ENCODE measurements at regions of chr1 and their contacts with region 1.

Region 1: GRCh38 chr1:239951511-239952140 is 140.1 kb upstream of the FMN2 start:
- DNase-seq: peak; percentile 63
- ATAC-seq: no peak
- H3K4me3 ChIP-seq: peak overlapping the region in 1 of 3 experiments; percentile 7; a peak in 1 of 6 replicates
- H3K27ac ChIP-seq: no peak overlapping the region
- H3K4me1 ChIP-seq: no peaks in the 10 kb centered on the region
- H3K27me3 ChIP-seq: no peaks in the 10 kb centered on the region; a peak in 2 of 5 replicates
- CTCF ChIP-seq: peak; percentile 73
- EP300 ChIP-seq: no peak
- POLR2A ChIP-seq: no peak
- RAD21 ChIP-seq: 0 out of 2 replicates have a peak, but pooled peaks have one; percentile 20

Region 2: GRCh38 chr1:239811211-239811885 is 140.3 kb before region 1 on chr1:
- CTCF ChIA-PET with region 1: no interaction called
- POLR2A ChIA-PET with region 1: no interaction called
- in situ Hi-C with region 1: no loop called
- intact Hi-C with region 1: no loop called
- DNase-seq: no peak
- ATAC-seq: no peak
- H3K4me3 ChIP-seq: no peak overlapping the region
- H3K27ac ChIP-seq: no peak overlapping the region
- H3K4me1 ChIP-seq: no peaks in the 10 kb centered on the region
- H3K27me3 ChIP-seq: no peaks in the 10 kb centered on the region
- CTCF ChIP-seq: no peak
- EP300 ChIP-seq: no peak
- POLR2A ChIP-seq: no peak
- RAD21 ChIP-seq: no peak

Region 3: GRCh38 chr1:239922778-239923522 is 28.7 kb before region 1 on chr1:
- CTCF ChIA-PET with region 1: no interaction called
- POLR2A ChIA-PET with region 1: no interaction called
- in situ Hi-C with region 1: no loop called
- intact Hi-C with region 1: no loop called
- DNase-seq: no peak
- ATAC-seq: no peak
- H3K4me3 ChIP-seq: no peak overlapping the region
- H3K27ac ChIP-seq: no peak overlapping the region
- H3K4me1 ChIP-seq: no peaks in the 10 kb centered on the region
- H3K27me3 ChIP-seq: no peaks in the 10 kb centered on the region
- CTCF ChIP-seq: no peak
- EP300 ChIP-seq: no peak
- POLR2A ChIP-seq: no peak
- RAD21 ChIP-seq: no peak

Region 4: GRCh38 chr1:239976130-239976968 is 24.7 kb after region 1 on chr1:
- CTCF ChIA-PET with region 1: interaction called, 34 read pairs
- POLR2A ChIA-PET with region 1: no interaction called
- in situ Hi-C with region 1: no loop called
- intact Hi-C with region 1: loop called (anchors 1 kb)
- DNase-seq: peak; percentile 35
- ATAC-seq: peak; percentile 62
- H3K4me3 ChIP-seq: no peak overlapping the region
- H3K27ac ChIP-seq: no peak overlapping the region
- H3K4me1 ChIP-seq: no peaks in the 10 kb centered on the region
- H3K27me3 ChIP-seq: no peaks in the 10 kb centered on the region
- CTCF ChIP-seq: peak; percentile 68
- EP300 ChIP-seq: no peak
- POLR2A ChIP-seq: no peak
- RAD21 ChIP-seq: 0 out of 2 replicates have a peak, but pooled peaks have one; percentile 12

Region 5: DNA sequence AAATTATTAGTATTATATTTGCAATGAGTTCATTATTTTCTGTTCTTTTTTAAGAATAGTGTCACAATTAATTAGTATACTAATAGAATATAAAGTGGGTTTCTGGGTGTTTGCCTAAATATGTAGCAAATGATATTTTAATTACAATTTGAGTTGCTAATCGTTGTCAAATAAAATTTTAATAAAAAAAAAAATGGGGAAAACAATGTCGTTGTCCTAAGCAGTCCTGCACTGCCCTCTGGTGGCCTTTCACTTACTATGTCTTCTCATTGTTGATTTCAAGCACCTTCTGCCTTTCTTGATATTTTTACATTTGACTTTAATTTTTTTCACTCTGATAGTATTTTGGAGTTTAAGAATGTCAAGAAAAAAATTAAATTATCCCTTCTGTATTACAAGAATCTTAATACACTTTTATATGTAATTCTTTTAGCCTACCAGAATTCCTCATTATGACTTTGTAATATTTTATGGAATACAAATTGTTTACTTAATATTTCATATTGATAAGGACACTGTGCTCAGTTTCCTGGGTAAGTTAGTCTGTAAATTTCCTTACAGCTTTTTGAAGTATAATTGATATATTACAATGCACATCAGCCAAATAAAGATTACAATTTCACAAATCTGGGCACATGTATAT is 35.6 kb after region 1 on chr1:
- CTCF ChIA-PET with region 1: interaction called, 22 read pairs
- POLR2A ChIA-PET with region 1: no interaction called
- in situ Hi-C with region 1: no loop called
- intact Hi-C with region 1: loop called (anchors 1 kb)
- DNase-seq: peak; percentile 28
- ATAC-seq: no peak
- H3K4me3 ChIP-seq: no peak overlapping the region
- H3K27ac ChIP-seq: no peak overlapping the region
- H3K4me1 ChIP-seq: no peaks in the 10 kb centered on the region
- H3K27me3 ChIP-seq: no peaks in the 10 kb centered on the region
- CTCF ChIP-seq: peak; percentile 28
- EP300 ChIP-seq: no peak
- POLR2A ChIP-seq: no peak
- RAD21 ChIP-seq: no peak

Region 6: GRCh38 chr1:240005997-240006650 is 54.5 kb after region 1 on chr1:
- CTCF ChIA-PET with region 1: no interaction called
- POLR2A ChIA-PET with region 1: no interaction called
- in situ Hi-C with region 1: no loop called
- intact Hi-C with region 1: loop called (anchors 1 kb)
- DNase-seq: no peak
- ATAC-seq: no peak
- H3K4me3 ChIP-seq: no peak overlapping the region
- H3K27ac ChIP-seq: no peak overlapping the region
- H3K4me1 ChIP-seq: no peaks in the 10 kb centered on the region
- H3K27me3 ChIP-seq: no peaks in the 10 kb centered on the region
- CTCF ChIP-seq: no peak
- EP300 ChIP-seq: no peak
- POLR2A ChIP-seq: no peak
- RAD21 ChIP-seq: no peak